Calu3 (cell line): ENCODE measurements at regions of chr4 and their contacts with region 1.

Region 1: DNA sequence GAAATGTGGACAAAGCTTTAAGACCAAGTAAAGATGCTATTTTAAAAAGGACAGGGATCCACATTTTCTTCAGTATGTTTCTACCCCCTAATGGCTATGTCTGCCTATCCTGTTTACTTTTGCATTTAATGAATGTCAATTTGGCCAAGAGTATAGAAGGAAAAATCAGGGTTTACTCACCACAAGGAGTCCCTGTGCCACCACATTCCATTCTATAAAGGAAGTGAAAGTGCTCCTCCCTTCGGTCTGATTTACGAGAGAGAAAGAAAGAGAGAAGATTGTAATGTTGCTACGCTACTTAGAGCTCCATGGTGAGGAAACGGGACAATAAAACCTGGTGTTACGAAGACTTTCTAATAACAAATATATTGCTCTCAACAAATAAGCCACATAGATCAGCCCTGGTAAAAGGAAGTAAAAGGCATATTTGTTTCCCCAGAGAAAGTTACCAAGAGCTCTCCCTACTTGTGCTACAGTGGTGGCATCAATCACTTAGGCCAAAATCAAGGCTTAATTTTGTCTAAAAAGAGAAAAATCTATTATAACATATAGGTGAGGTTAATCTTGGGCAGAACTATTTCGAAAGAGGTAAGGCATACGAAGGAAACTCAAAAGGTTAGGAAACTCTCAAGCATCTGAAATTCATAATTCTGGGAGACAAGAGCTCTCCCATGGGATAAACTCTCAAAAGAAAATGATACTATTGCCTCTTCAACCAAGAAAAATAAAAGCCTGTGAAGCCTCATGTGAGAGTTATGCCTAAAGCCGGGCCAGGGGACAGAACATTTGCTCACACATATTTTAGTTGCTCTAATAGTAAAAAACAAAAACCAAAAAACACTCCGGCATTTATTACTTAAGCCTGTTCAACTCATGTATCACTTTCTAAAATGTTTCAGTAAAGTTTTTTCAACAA is 29.5 kb downstream of the TAPT1 start:
- DNase-seq: peak; percentile 29
- H3K4me3 Mint-ChIP-seq: peak overlapping the region; percentile 61
- H3K27ac Mint-ChIP-seq: peak overlapping the region; percentile 88
- H3K4me1 Mint-ChIP-seq: peaks cover 8% of the 10 kb centered on the region
- H3K27me3 Mint-ChIP-seq: no peaks in the 10 kb centered on the region
- CTCF ChIP-seq: no peak

Region 2: GRCh38 chr4:15920723-15921591 is 275.8 kb before region 1 on chr4:
- CTCF ChIA-PET with region 1: no interaction called
- intact Hi-C with region 1: no loop called
- DNase-seq: peak; percentile 78
- H3K4me3 Mint-ChIP-seq: peak overlapping the region; percentile 43
- H3K27ac Mint-ChIP-seq: peak overlapping the region; percentile 89
- H3K4me1 Mint-ChIP-seq: peaks cover 65% of the 10 kb centered on the region
- H3K27me3 Mint-ChIP-seq: no peaks in the 10 kb centered on the region
- CTCF ChIP-seq: no peak

Region 3: GRCh38 chr4:15963001-15963451 is 233.7 kb before region 1 on chr4 and contains the start of gene FGFBP2:
- CTCF ChIA-PET with region 1: no interaction called
- intact Hi-C with region 1: loop called (anchors 1 kb)
- DNase-seq: peak; percentile 66
- H3K4me3 Mint-ChIP-seq: no peak within 1 kb of the TSS
- H3K27ac Mint-ChIP-seq: no peak within 1 kb of the TSS
- H3K4me1 Mint-ChIP-seq: no peaks in the 10 kb centered on the region
- H3K27me3 Mint-ChIP-seq: no peaks in the 10 kb centered on the region
- CTCF ChIP-seq: peak; percentile 41
- total RNA-seq, gene FGFBP2: not detected in 2 replicates

Region 4: GRCh38 chr4:16026160-16026761 is 170.5 kb before region 1 on chr4:
- CTCF ChIA-PET with region 1: interaction called, 4 read pairs
- intact Hi-C with region 1: loop called (anchors 1 kb)
- DNase-seq: peak; percentile 24
- H3K4me3 Mint-ChIP-seq: no peak overlapping the region
- H3K27ac Mint-ChIP-seq: no peak overlapping the region
- H3K4me1 Mint-ChIP-seq: peaks cover 25% of the 10 kb centered on the region
- H3K27me3 Mint-ChIP-seq: no peaks in the 10 kb centered on the region
- CTCF ChIP-seq: peak; percentile 54

Region 5: GRCh38 chr4:16082426-16083240 is 114.1 kb before region 1 on chr4:
- CTCF ChIA-PET with region 1: interaction called, 4 read pairs
- intact Hi-C with region 1: loop called (anchors 5 kb)
- DNase-seq: peak; percentile 37
- H3K4me3 Mint-ChIP-seq: peak overlapping the region; percentile 82
- H3K27ac Mint-ChIP-seq: peak overlapping the region; percentile 50
- H3K4me1 Mint-ChIP-seq: peaks cover 6% of the 10 kb centered on the region
- H3K27me3 Mint-ChIP-seq: peaks cover 18% of the 10 kb centered on the region
- CTCF ChIP-seq: no peak

Region 6: DNA sequence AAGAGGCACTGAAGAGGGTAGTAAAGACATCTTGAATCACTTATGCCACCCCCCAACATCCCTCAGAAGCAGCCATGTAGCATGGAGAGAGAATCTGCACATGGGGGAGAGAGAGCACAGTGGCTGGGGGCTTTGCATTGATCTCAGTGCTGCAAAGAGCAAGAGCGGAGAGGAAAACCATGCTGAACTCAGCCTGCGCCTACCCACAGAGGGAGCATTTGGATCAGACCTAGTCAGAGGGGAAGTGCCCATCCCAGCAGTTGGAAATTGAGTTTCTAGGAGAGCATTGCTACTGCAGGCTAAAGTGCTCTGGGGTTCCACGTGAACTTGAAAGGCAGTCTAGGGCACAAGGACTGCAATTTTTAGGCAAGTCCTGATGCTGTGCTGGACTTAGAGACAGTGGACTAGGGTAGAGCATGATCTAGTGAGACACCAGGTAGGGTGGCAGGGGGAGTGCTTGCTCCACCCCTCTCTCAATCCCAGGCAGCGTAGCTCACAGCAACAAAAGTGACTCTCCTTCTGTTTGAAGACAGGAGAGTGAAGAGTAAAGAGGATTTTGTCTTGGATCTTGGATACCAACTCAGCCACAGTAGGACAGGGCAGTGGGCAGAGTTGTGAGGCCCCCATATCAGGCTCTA is 103.9 kb before region 1 on chr4:
- CTCF ChIA-PET with region 1: no interaction called
- intact Hi-C with region 1: no loop called
- DNase-seq: no peak
- H3K4me3 Mint-ChIP-seq: no peak overlapping the region
- H3K27ac Mint-ChIP-seq: no peak overlapping the region
- H3K4me1 Mint-ChIP-seq: peaks cover 12% of the 10 kb centered on the region
- H3K27me3 Mint-ChIP-seq: no peaks in the 10 kb centered on the region
- CTCF ChIP-seq: no peak

Region 7: DNA sequence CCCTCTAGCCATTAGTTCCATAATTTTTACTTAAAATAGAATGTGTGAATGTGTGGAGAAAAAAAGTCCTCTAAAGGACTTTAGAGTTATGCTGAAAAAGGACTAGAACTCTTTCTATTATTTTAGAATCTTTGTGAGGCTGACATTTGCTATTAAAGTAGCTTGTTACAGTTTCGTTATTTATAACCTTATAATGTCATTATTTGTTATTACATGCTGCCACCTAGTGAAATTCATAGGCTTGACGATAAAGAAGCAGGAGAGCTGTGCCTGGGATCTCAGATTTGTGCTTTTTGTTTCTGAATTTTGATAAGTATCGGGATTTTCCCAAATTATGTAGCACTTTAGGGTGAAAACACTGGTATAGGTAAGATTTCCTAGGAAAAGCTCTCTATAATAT is 68.1 kb after region 1 on chr4:
- CTCF ChIA-PET with region 1: interaction called, 10 read pairs
- intact Hi-C with region 1: loop called (anchors 1 kb)
- DNase-seq: no peak
- H3K4me3 Mint-ChIP-seq: no peak overlapping the region
- H3K27ac Mint-ChIP-seq: no peak overlapping the region
- H3K4me1 Mint-ChIP-seq: no peaks in the 10 kb centered on the region
- H3K27me3 Mint-ChIP-seq: no peaks in the 10 kb centered on the region
- CTCF ChIP-seq: no peak